Activated naive CD4-positive, alpha-beta T cell treated with anti-CD3 and anti-CD28 coated beads for 36 hours (primary cell): ENCODE measurements at regions of chr9 and their contacts with region 1.

Region 1: DNA sequence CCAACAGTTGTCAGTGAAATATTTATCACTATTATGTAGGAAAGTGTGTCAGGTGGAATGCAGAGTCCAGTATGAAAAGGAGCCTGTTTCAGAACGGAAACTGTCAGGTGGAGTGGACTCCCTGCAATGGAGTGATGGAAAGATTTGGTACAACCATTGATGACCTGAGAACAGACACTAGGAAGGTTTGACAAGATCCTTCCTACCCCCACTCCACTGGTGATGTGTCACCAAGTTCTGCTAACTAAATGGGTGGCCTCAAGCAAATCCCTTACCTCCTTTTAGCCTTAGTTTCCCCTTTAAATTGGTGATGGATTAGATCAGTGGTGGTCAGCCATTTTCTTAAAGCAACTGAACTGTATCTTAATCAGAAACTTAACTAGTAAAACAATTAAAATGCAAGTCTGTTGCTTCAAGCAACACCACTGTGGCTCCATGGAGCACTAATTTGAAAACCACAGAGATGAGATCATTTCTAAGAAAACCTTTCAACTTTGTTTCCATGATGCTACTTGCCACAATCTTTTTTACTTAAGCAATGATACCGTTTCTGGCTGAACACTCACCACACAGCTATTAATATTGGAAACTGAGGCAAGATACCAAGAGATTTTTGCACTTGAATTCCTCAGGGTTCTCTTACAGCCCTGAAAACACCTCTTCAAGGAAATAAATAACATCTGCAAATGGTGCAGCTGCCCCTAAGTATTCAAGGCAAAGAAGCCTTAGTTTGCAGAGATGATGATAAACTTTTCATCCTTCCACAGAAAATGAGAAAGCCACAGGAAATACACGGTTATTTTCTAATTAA is 140.6 kb downstream of the ERCC6L2 start:
- DNase-seq: peak; percentile 62
- H3K4me3 Mint-ChIP-seq: peak overlapping the region; percentile 32
- H3K27ac Mint-ChIP-seq: peak overlapping the region; percentile 99
- H3K4me1 Mint-ChIP-seq: peaks cover 64% of the 10 kb centered on the region
- H3K27me3 Mint-ChIP-seq: no peaks in the 10 kb centered on the region

Region 2: DNA sequence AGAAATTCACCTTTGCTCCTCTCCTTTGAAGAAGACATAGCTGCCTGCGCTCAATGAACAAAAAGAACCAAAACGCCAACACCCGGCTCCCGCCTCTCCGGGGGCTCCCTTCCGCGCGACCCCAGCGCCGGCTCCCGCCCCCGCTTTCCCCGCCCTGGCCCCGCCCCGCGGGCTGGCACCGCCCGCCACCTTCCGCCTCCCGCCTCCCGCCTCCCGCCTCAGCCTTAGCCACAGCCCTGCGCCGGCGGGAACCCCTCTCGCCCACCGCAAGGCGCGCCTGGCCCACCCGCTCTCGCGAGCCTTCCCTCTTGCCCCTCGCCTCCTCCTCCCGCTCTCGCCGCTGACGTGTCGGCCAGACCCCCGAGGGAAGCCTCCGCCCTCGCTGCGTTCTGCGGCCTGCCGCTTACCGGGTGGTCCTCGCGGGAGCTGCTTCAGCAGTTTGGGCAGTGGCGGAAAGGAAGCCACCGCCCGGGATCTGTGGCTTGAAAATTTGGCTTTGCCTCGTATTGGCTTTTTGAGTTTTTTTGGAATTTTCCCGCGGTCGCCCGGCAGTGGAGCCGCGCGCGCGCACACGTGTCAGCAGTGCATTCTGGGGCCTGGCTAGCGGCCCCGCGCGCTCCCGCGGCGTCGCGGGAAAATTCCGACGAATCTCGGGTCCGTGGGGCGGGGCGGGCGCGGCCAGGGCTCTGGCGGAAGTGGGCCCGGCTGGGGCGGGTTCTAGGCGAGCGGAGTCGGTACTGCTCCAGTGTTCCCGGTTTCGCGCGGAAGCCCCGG is 698.8 kb before region 1 on chr9 and contains the start of gene FANCC:
- CTCF ChIA-PET with region 1: no interaction called
- intact Hi-C with region 1: loop called (anchors 5 kb)
- DNase-seq: peak; percentile 85
- H3K4me3 Mint-ChIP-seq: peak within 1 kb of the TSS; percentile 91
- H3K27ac Mint-ChIP-seq: peak within 1 kb of the TSS; percentile 93
- H3K4me1 Mint-ChIP-seq: peaks cover 18% of the 10 kb centered on the region
- H3K27me3 Mint-ChIP-seq: peaks cover 6% of the 10 kb centered on the region
- total RNA-seq, gene FANCC: 14.1 to 14.5 TPM

Region 3: DNA sequence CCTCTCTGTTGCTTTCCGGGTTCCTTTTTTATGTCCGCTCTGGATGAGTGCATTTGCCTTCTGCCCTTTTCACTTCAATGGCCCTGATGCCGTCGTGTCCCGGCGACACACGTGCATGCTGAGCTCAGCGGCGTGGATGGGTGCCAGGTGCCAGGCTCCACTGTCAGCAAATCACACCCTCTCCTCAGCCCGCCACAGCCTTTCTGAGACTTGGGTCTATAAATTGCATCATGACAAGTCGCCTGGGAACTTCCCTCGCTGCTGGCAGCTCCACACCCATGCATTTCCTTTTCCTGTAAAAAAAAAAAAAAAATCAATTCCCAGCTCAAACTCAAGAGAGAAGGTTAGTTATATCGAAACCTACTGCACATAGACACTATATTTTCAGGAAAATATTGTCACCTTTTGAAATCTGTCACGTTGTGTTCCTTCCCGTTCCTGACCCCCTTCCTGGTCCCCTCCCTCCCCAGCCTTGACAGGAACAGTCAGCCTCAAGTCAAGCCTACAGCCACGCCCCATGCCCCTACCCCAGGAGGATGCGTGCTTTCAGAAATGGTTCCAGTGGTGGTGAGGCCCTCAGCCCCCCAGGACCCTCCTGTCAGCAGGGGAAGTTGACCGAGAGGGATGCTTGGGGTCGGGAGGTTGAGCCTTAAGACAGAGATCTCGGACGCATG is 389.1 kb before region 1 on chr9:
- CTCF ChIA-PET with region 1: no interaction called
- intact Hi-C with region 1: loop called (anchors 2 kb)
- DNase-seq: peak; percentile 91
- H3K4me3 Mint-ChIP-seq: no peak overlapping the region
- H3K27ac Mint-ChIP-seq: peak overlapping the region; percentile 97
- H3K4me1 Mint-ChIP-seq: peaks cover 31% of the 10 kb centered on the region
- H3K27me3 Mint-ChIP-seq: no peaks in the 10 kb centered on the region

Region 4: GRCh38 chr9:95875305-95876137 is 140.6 kb before region 1 on chr9 and contains the start of gene ERCC6L2:
- CTCF ChIA-PET with region 1: interaction called, 6 read pairs
- intact Hi-C with region 1: loop called (anchors 1 kb)
- DNase-seq: peak; percentile 96
- H3K4me3 Mint-ChIP-seq: no peak within 1 kb of the TSS
- H3K27ac Mint-ChIP-seq: no peak within 1 kb of the TSS
- H3K4me1 Mint-ChIP-seq: peaks cover 24% of the 10 kb centered on the region
- H3K27me3 Mint-ChIP-seq: no peaks in the 10 kb centered on the region
- total RNA-seq, gene ERCC6L2: 20.3 to 20.6 TPM

Region 5: DNA sequence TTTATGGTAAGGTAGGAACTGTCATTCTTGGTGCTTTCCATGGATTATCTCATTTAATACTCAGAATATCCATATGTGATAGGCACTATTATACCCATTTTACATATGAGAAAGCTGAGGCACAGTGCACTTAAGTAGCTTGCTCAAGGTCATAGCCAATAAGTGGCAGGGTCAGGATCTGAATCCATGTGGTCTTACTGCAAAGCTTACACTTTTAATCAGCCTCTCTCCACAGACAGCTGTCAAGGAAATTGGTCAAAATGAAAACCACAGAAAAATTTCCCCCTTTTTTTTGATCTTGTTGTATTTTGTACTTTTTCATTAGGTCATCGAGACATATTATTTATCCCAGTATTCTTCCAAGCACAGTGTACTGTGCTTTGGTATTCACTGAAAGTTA is 62.1 kb before region 1 on chr9:
- CTCF ChIA-PET with region 1: no interaction called
- intact Hi-C with region 1: loop called (anchors 2 kb)
- DNase-seq: no peak
- H3K4me3 Mint-ChIP-seq: no peak overlapping the region
- H3K27ac Mint-ChIP-seq: peak overlapping the region; percentile 64
- H3K4me1 Mint-ChIP-seq: peaks cover 18% of the 10 kb centered on the region
- H3K27me3 Mint-ChIP-seq: no peaks in the 10 kb centered on the region

Region 6: DNA sequence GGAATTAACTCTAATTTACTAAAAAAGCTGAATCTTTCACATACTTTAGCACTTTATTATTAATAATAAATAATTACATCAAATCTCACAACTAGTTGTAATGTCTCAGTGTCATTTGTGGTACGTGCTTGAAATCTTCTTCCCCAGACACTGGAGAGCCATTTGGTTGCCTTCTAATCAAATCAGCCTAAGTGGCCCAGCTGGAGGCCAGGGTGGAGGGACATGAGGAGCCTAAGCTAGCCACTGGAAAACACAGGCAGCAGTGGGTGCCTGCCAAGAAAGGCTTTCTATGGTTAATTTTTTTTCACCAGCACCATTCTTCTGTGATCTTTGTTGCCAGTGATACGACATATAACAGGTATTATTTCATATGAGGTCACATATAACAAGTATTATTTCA is 23.5 kb before region 1 on chr9:
- CTCF ChIA-PET with region 1: no interaction called
- intact Hi-C with region 1: loop called (anchors 2 kb)
- DNase-seq: no peak
- H3K4me3 Mint-ChIP-seq: no peak overlapping the region
- H3K27ac Mint-ChIP-seq: no peak overlapping the region
- H3K4me1 Mint-ChIP-seq: peaks cover 16% of the 10 kb centered on the region
- H3K27me3 Mint-ChIP-seq: no peaks in the 10 kb centered on the region

Region 7: GRCh38 chr9:96232539-96233241 is 216.6 kb after region 1 on chr9:
- CTCF ChIA-PET with region 1: no interaction called
- intact Hi-C with region 1: no loop called
- DNase-seq: peak; percentile 57
- H3K4me3 Mint-ChIP-seq: no peak overlapping the region
- H3K27ac Mint-ChIP-seq: no peak overlapping the region
- H3K4me1 Mint-ChIP-seq: peaks cover 2% of the 10 kb centered on the region
- H3K27me3 Mint-ChIP-seq: peaks cover 25% of the 10 kb centered on the region